ENCODE measurements at regions of chr2 and their contacts with region 1.

Region 1: GRCh38 chr2:85291425-85292023 is 36.3 kb downstream of the TGOLN2 start:
- DNase-seq: no peak
- H3K4me3 ChIP-seq: no peak overlapping the region
- H3K27ac ChIP-seq: no peak overlapping the region
- H3K4me1 ChIP-seq: peaks cover 9% of the 10 kb centered on the region
- H3K27me3 ChIP-seq: no peaks in the 10 kb centered on the region
- CTCF ChIP-seq: no peak
- POLR2A ChIP-seq: no peak

Region 2: DNA sequence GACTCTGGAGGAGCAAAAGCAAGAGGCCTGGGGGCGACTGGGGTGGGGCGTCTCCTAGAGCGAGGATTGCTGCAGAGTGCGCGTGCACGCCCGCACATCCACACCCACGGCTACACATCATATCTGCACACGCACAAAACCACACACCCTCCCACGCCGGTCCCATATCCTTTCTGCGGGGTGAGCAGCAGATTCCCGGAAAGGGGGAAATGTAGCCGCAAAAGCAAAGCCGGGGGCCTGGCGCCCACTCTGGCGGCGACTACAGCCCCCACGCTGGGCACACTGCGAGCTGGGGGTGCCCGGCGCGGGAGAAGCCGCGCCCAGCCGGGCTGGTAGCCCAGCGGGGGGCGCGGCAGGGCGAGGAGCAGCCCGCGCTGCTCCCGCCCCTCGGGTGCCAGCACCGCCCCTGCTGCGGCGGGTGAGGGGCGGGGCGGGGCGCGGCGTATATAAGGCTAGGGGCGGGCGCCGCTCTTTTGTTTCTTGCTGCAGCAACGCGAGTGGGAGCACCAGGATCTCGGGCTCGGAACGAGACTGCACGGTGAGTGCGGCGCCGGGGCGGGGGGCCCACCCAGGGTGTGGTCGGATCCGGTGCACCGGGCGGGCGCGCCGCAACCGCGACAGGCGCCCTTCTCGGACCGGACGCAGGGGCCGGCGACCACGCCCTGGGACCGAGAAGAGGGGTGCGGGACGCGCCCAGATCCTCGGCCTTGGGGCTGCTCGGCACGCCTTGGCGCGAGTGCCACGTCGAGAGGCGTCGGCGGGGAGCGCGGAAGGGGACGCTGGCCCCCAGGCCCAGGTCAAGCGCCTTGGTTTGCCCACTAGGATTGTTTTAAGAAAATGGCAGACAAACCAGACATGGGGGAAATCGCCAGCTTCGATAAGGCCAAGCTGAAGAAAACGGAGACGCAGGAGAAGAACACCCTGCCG is 386.1 kb before region 1 on chr2 and contains the start of gene TMSB10:
- intact Hi-C with region 1: loop called (anchors 10 kb)
- DNase-seq: peak in 1 of 2 donors; percentile 87
- H3K4me3 ChIP-seq: peak within 1 kb of the TSS; percentile 82 to 84
- H3K27ac ChIP-seq: peak within 1 kb of the TSS; percentile 92
- H3K4me1 ChIP-seq: peaks cover 19% of the 10 kb centered on the region
- H3K27me3 ChIP-seq: no peaks in the 10 kb centered on the region
- CTCF ChIP-seq: no peak
- POLR2A ChIP-seq: peak in 1 of 2 donors; percentile 94
- total RNA-seq, gene TMSB10: 2,211 TPM

Region 3: GRCh38 chr2:85066874-85067351 is 224.6 kb before region 1 on chr2:
- intact Hi-C with region 1: loop called (anchors 5 kb)
- DNase-seq: no peak
- H3K4me3 ChIP-seq: peak overlapping the region; percentile 16 to 19
- H3K27ac ChIP-seq: no peak overlapping the region
- H3K4me1 ChIP-seq: peaks cover 5% of the 10 kb centered on the region
- H3K27me3 ChIP-seq: no peaks in the 10 kb centered on the region
- CTCF ChIP-seq: peak; percentile 63 to 79 (median 74)
- POLR2A ChIP-seq: no peak

Region 4: GRCh38 chr2:85340034-85340892 is 48.7 kb after region 1 on chr2:
- intact Hi-C with region 1: no loop called
- DNase-seq: no peak
- H3K4me3 ChIP-seq: no peak overlapping the region
- H3K27ac ChIP-seq: no peak overlapping the region
- H3K4me1 ChIP-seq: no peaks in the 10 kb centered on the region
- H3K27me3 ChIP-seq: no peaks in the 10 kb centered on the region
- CTCF ChIP-seq: no peak
- POLR2A ChIP-seq: no peak

Region 5: DNA sequence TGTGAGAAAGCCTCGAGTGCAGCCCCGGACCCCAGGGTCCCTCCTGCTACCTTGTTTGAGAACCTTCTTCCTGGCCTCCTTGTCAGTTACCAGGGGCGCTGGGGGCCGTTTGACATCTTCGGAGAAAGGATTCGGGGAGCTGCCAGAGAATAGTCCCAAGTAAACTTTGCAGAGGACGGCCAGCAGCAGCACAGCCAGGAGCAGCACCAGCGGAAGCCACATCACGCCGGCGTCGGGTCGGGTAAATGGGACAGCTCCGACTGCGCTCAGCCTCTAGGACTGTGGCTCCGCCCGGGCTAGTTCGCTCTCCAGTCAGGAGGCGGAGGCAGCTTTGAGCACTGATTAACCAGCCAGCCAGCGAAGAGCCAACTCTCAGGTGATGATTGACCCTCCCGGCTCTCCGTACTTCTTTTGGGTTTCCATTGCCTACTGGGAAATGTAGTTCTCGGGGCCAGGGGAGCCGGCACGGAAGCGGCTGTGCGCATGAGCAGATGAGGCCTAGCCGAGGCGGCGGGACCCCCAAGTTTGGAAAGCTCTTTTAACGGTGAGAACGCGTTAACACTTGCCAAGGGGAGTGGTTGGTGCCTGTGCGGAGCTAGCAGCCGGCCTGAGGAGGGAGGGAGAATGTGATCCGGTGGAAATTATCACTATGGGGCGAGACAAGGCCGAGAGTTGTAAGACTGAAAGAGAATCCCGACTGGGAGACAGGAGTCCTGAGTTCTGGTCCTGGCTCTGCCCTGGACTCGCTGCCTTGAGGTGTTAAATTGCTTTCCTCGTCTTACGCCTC is 63.0 kb after region 1 on chr2 and contains the starts of genes ELMOD3 and RETSAT:
- intact Hi-C with region 1: no loop called
- DNase-seq: peak; percentile 99
- H3K4me3 ChIP-seq: peak within 1 kb of the TSS; percentile 58 to 76
- H3K27ac ChIP-seq: peak within 1 kb of the TSS; percentile 76
- H3K4me1 ChIP-seq: peaks cover 30% of the 10 kb centered on the region
- H3K27me3 ChIP-seq: no peaks in the 10 kb centered on the region
- CTCF ChIP-seq: no peak
- POLR2A ChIP-seq: peak in 1 of 2 donors; percentile 76
- total RNA-seq, gene ELMOD3: 44.7 TPM
- total RNA-seq, gene RETSAT: 62.1 TPM

Measured in vagina (tissue), 2 donors.